AG04450 (cell line): ENCODE measurements at regions of chr20 and their contacts with region 1.

Region 1: GRCh38 chr20:47379433-47380150 is 23.1 kb upstream of the ZMYND8 start:
- DNase-seq: peak; percentile 63
- H3K4me3 ChIP-seq: no peak overlapping the region
- H3K27ac ChIP-seq: peak overlapping the region; percentile 52
- H3K27me3 ChIP-seq: no peaks in the 10 kb centered on the region
- CTCF ChIP-seq: no peak

Region 2: GRCh38 chr20:46752728-46753127 is 626.9 kb before region 1 on chr20:
- CTCF ChIA-PET with region 1: interaction called, 40 read pairs
- POLR2A ChIA-PET with region 1: no interaction called
- DNase-seq: no peak
- H3K4me3 ChIP-seq: peak overlapping the region; percentile 17; the same call in 1 of the 2 replicates
- H3K27ac ChIP-seq: no peak overlapping the region
- H3K27me3 ChIP-seq: peaks cover 3% of the 10 kb centered on the region
- CTCF ChIP-seq: peak; percentile 73

Region 3: GRCh38 chr20:47220161-47220582 is 159.4 kb before region 1 on chr20:
- CTCF ChIA-PET with region 1: interaction called, 52 read pairs
- POLR2A ChIA-PET with region 1: interaction called, 4 read pairs
- DNase-seq: no peak
- H3K4me3 ChIP-seq: no peak overlapping the region
- H3K27ac ChIP-seq: no peak overlapping the region
- H3K27me3 ChIP-seq: no peaks in the 10 kb centered on the region
- CTCF ChIP-seq: peak; percentile 64

Region 4: DNA sequence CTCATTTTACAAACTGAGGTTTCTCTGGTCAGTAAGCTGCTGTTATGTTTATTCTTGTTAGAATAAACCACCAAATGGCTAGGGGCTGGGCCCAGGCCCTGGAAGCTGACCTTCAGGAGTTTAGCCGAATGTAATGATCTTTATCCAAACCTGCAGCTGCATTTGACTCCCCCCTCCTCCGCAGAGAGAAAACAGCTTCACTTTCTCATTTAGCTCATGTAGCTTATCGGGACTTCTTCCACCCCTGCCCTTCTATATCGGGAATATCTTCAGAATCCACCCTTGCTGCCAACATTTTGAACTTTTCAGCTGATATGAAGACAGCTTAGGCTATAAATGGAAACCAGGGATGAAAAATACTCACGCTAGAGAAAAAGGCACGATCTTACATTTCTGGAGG is 125.7 kb before region 1 on chr20:
- CTCF ChIA-PET with region 1: interaction called, 14 read pairs
- POLR2A ChIA-PET with region 1: interaction called, 3 read pairs
- DNase-seq: no peak
- H3K4me3 ChIP-seq: no peak overlapping the region
- H3K27ac ChIP-seq: no peak overlapping the region
- H3K27me3 ChIP-seq: no peaks in the 10 kb centered on the region
- CTCF ChIP-seq: no peak

Region 5: DNA sequence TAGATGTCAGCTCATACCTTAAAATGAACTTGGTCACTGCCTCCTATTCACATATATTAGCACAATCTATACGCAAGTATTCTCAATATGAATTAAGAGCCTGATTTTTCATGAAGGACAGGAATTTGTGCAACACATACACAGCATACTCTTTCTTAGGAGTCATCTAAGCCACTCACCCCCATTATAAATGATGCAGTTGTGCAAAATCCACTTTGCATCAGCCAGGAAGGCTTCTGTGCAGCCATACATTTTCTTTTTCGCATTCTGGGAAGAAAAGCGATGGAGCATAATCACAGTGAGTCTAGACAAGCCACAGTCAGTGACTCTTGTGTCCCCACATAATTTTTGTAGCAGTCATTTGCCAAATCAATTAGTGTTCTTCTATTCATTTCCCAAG is 89.6 kb before region 1 on chr20:
- CTCF ChIA-PET with region 1: interaction called, 22 read pairs
- POLR2A ChIA-PET with region 1: no interaction called
- DNase-seq: no peak
- H3K4me3 ChIP-seq: no peak overlapping the region
- H3K27ac ChIP-seq: no peak overlapping the region
- H3K27me3 ChIP-seq: no peaks in the 10 kb centered on the region
- CTCF ChIP-seq: no peak

Region 6: GRCh38 chr20:47317127-47317895 is 62.3 kb before region 1 on chr20:
- CTCF ChIA-PET with region 1: interaction called, 32 read pairs
- POLR2A ChIA-PET with region 1: interaction called, 3 read pairs
- DNase-seq: peak; percentile 88
- H3K4me3 ChIP-seq: no peak overlapping the region; the same call in 1 of the 2 replicates
- H3K27ac ChIP-seq: peak overlapping the region; percentile 98
- H3K27me3 ChIP-seq: no peaks in the 10 kb centered on the region
- CTCF ChIP-seq: no peak

Region 7: DNA sequence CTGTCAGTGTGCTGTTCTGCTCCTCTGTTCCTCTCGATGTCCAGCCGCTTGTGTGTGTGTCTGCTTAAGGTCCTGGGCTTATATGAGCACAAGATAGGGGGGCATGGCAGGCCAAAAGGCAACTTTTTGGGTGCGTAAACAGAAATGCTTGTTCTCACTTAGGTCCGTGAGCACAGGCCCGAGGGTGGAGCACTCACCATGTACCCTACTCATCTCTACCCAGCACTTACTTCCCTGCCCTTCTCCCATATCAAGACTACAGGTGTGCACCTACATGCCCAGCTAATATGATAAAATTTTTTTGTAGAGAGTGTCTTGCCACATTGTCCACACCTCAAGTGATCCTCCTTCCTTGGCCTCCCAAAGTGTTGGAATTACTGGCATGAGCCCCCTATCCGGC is 156.4 kb after region 1 on chr20:
- CTCF ChIA-PET with region 1: no interaction called
- POLR2A ChIA-PET with region 1: no interaction called
- DNase-seq: no peak
- H3K4me3 ChIP-seq: no peak overlapping the region
- H3K27ac ChIP-seq: no peak overlapping the region
- H3K27me3 ChIP-seq: no peaks in the 10 kb centered on the region
- CTCF ChIP-seq: no peak

Region 8: DNA sequence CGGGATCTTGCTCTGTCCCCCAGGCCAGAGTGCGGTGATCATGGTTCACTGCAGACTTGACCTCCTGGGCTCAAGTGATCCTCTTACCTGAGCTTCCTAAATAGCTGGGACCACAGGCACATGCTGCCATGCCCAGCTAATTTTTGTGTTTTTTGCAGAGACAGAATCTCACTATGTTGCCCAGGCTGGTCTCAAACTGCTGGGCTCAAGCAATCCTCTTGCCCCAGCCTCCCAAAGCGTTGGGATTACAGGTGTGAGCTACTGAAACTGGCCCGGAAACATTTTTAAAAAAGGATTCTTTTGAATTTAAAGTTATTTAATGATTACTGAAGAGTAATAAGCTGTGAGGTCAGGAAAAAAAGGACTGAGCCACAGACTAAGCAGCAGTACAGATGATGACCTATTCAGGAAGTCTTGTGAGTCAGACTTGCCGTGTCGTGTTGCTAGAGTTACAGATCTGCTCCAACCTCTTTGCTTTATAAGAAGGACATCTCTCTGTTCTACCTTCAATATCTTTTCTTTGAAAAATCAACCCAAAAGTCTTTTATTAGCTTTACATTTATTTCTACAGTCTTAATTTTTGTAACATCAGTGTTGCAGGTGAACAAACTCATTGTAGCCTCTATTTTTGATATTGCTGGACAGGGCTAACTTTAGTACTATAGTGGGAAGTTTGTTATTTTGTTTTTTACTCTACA is 230.8 kb after region 1 on chr20:
- CTCF ChIA-PET with region 1: interaction called, 27 read pairs
- POLR2A ChIA-PET with region 1: no interaction called
- DNase-seq: peak; percentile 34
- H3K4me3 ChIP-seq: no peak overlapping the region
- H3K27ac ChIP-seq: peak overlapping the region; percentile 66
- H3K27me3 ChIP-seq: no peaks in the 10 kb centered on the region
- CTCF ChIP-seq: no peak

Region 9: DNA sequence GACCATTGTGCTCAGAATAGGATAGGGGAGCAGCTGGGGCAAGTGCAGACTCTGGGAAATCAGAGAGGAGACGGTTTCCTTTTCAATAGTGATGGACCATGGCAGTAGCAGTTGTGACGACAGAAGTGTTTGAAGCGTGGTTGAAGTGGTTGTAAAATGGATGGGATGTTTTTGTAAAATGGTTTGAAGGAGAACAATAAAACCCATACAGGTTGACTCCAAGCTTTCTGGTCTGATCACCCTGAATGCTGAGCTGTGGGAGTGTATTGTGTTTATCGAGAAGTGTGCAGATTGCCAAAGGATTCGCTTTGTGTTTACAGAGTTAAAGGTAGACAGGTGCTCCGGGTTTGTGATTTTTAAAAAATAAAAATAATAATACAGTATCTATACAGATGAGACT is 660.9 kb after region 1 on chr20:
- CTCF ChIA-PET with region 1: no interaction called
- POLR2A ChIA-PET with region 1: no interaction called
- DNase-seq: no peak
- H3K4me3 ChIP-seq: no peak overlapping the region
- H3K27ac ChIP-seq: no peak overlapping the region
- H3K27me3 ChIP-seq: peaks cover 2% of the 10 kb centered on the region
- CTCF ChIP-seq: no peak